ENCODE measurements at regions of chr3 and their contacts with region 1.

Region 1: DNA sequence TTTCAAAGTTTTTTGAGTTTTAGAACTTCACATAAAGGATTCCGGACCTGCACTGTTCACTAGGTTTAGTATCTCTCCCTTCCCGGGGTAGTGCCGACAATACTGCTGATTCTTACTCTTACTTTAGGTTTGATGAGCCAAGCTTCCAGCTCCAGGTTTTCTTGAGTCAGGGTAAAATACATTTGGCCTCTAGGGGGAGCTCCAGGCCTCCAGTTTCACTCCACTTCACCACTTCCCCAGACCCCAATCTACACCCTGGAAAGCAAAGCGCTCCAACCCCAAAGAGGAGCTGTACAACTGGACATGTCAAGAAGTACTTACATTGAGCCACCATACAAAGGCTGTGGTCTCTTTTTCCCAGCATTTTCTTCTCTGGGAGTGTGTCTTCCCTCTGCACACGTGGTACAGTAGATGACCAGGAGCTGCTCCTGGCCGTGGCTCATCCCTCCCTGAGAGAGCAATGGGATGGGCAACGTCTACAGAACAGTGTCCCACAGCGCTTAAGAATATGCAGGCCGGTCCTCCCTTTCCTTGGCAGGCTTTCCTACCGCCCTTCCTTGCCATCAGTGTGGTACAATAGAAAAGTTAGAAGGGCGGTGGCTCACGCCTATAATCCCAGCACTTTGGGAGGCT is 93.9 kb upstream of the CCDC80 start:
- DNase-seq: peak; percentile 77
- H3K4me3 ChIP-seq: no peak overlapping the region
- H3K27ac ChIP-seq: no peak overlapping the region
- H3K4me1 ChIP-seq: no peaks in the 10 kb centered on the region
- H3K27me3 ChIP-seq: no peaks in the 10 kb centered on the region
- CTCF ChIP-seq: peak; percentile 79 to 80
- POLR2A ChIP-seq: no peak

Region 2: DNA sequence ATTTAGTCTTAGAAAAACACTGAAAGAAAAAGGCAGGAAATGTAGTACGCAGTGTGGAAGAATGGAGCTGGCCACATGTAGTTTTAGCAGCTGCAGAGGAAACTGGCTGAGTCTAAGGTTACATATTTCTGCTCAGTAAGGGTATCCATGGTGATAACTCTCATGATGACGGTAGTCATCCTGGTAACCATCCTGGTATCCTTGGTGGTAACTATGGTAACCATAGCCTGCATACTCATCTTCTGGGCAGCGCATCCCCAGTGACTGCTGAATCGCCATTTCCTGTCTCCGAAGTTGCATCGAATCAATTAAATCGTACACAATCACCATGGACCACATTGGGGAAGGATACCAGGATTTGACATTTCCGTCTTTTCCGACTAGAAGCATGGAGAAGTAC is 129.5 kb before region 1 on chr3:
- CTCF ChIA-PET with region 1: interaction called, 10 read pairs
- POLR2A ChIA-PET with region 1: no interaction called
- dilution Hi-C with region 1: no loop called
- intact Hi-C with region 1: no loop called
- DNase-seq: peak; percentile 98
- H3K4me3 ChIP-seq: peak overlapping the region in 1 of 3 experiments; percentile 38
- H3K27ac ChIP-seq: peak overlapping the region; percentile 94
- H3K4me1 ChIP-seq: peaks cover 17% of the 10 kb centered on the region
- H3K27me3 ChIP-seq: no peaks in the 10 kb centered on the region
- CTCF ChIP-seq: no peak
- POLR2A ChIP-seq: no peak

Region 3: GRCh38 chr3:112751564-112752512 is 17.0 kb after region 1 on chr3:
- CTCF ChIA-PET with region 1: interaction called, 26 read pairs
- POLR2A ChIA-PET with region 1: no interaction called
- dilution Hi-C with region 1: no loop called
- intact Hi-C with region 1: no loop called
- DNase-seq: peak; percentile 15
- H3K4me3 ChIP-seq: no peak overlapping the region
- H3K27ac ChIP-seq: no peak overlapping the region
- H3K4me1 ChIP-seq: no peaks in the 10 kb centered on the region
- H3K27me3 ChIP-seq: no peaks in the 10 kb centered on the region
- CTCF ChIP-seq: no peak
- POLR2A ChIP-seq: no peak

Region 4: GRCh38 chr3:112786002-112786590 is 51.3 kb after region 1 on chr3:
- CTCF ChIA-PET with region 1: interaction called, 13 read pairs
- POLR2A ChIA-PET with region 1: no interaction called
- dilution Hi-C with region 1: no loop called
- intact Hi-C with region 1: no loop called
- DNase-seq: peak; percentile 96
- H3K4me3 ChIP-seq: no peak overlapping the region
- H3K27ac ChIP-seq: no peak overlapping the region
- H3K4me1 ChIP-seq: peaks cover 8% of the 10 kb centered on the region
- H3K27me3 ChIP-seq: no peaks in the 10 kb centered on the region
- CTCF ChIP-seq: no peak
- POLR2A ChIP-seq: no peak

Region 5: GRCh38 chr3:112973325-112974177 is 238.7 kb after region 1 on chr3:
- CTCF ChIA-PET with region 1: interaction called, 184 read pairs
- POLR2A ChIA-PET with region 1: no interaction called
- dilution Hi-C with region 1: no loop called
- intact Hi-C with region 1: no loop called
- DNase-seq: no peak
- H3K4me3 ChIP-seq: no peak overlapping the region
- H3K27ac ChIP-seq: no peak overlapping the region
- H3K4me1 ChIP-seq: no peaks in the 10 kb centered on the region
- H3K27me3 ChIP-seq: peaks cover 9 to 31% of the 10 kb centered on the region in 2 experiments
- CTCF ChIP-seq: no peak
- POLR2A ChIP-seq: no peak

Region 6: GRCh38 chr3:113019182-113020137 is 284.6 kb after region 1 on chr3:
- CTCF ChIA-PET with region 1: interaction called, 11 read pairs
- POLR2A ChIA-PET with region 1: no interaction called
- dilution Hi-C with region 1: no loop called
- intact Hi-C with region 1: no loop called
- DNase-seq: peak; percentile 91
- H3K4me3 ChIP-seq: peak overlapping the region; percentile 83 to 91 (median 83)
- H3K27ac ChIP-seq: peak overlapping the region; percentile 75
- H3K4me1 ChIP-seq: peaks cover 16% of the 10 kb centered on the region
- H3K27me3 ChIP-seq: no peaks in the 10 kb centered on the region
- CTCF ChIP-seq: no peak
- POLR2A ChIP-seq: peak; percentile 75